Activated CD4-positive, alpha-beta memory T cell treated with anti-CD3 and anti-CD28 coated beads for 36 hours (primary cell): ENCODE measurements at regions of chr1 and their contacts with region 1.

Region 1: GRCh38 chr1:109370712-109371455 is 26.8 kb downstream of the SORT1 start:
- DNase-seq: no peak
- H3K4me3 Mint-ChIP-seq: no peak overlapping the region
- H3K27ac Mint-ChIP-seq: no peak overlapping the region
- H3K4me1 Mint-ChIP-seq: peaks cover 20% of the 10 kb centered on the region
- H3K27me3 Mint-ChIP-seq: peaks cover 22% of the 10 kb centered on the region

Region 2: DNA sequence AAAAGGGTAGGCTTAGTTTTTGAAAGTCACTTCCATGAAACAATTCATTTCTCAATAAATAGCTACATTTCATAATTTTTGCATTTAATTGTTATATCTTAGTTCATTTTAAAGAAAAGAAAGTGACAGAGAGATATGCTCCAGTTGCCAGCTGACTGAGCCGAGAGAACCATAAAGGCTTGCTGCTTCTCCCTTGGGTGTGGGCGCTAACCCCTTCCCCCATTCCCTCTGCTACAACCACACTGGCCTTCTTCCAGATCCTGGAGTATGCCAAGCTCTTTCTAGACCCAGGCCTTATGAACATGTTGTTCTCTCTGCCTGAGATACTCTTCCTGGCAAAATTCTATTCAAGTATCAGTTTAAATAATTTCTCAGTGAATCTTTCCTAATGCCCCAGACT is 14.5 kb after region 1 on chr1:
- CTCF ChIA-PET with region 1: no interaction called
- POLR2A ChIA-PET with region 1: no interaction called
- intact Hi-C with region 1: loop called (anchors 2 kb)
- DNase-seq: no peak
- H3K4me3 Mint-ChIP-seq: no peak overlapping the region
- H3K27ac Mint-ChIP-seq: no peak overlapping the region
- H3K4me1 Mint-ChIP-seq: peaks cover 2% of the 10 kb centered on the region
- H3K27me3 Mint-ChIP-seq: peaks cover 13% of the 10 kb centered on the region